Mammary epithelial cell (primary cell): ENCODE measurements at regions of chr1 and their contacts with region 1.

Region 1: DNA sequence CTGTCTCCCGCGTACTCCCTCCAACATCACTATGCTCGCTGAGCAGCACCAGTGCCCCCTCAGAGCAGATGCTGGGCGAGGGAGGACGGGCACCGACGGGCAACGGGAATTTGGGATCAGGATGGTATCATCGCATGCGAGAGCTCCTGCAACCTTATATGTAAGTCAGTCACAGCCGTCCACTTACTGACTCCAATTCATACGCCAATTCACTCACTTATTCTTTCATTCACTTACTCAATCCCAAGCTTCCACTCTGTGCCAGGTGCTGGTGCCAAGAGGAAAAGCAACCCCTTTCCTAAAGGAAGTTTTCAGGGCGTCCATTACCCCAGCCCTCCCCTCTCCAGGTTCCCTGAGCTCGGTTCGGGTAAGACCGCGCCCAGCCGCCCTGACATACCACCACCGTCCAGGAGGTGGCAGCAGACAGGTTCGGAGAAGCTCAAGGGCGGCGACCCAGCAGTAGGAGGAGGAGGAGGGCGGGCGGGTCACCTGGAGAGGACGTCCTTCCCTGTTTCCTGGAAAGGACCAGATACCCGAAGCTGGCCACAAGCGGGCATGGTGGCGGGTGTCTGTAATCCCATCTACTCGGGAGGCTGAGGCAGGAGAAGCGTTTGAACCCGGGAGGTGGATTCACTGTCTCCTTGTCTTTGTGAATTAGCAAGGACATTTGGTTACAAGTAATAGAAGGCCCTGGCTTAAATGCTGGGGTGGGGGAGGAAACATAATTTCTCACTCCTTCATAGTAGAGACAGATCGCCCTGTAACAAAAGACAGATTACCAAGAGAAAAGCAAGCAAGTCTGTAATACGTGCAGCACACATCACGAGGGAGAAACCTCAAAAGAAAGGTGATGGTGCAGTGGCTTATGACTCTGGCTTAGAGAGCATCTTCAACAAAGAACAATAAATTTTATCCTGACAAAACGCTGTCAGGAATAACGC is 7.6 kb upstream of the IL22RA1 start:
- DNase-seq: peak; percentile 88
- H3K4me3 ChIP-seq: peak overlapping the region; percentile 26 to 33 (median 29)
- H3K27ac ChIP-seq: peak overlapping the region; percentile 93
- H3K4me1 ChIP-seq: peaks cover 30% of the 10 kb centered on the region
- H3K27me3 ChIP-seq: no peaks in the 10 kb centered on the region
- CTCF ChIP-seq: peak; percentile 72 to 88

Region 2: GRCh38 chr1:24080131-24080530 is 70.4 kb before region 1 on chr1:
- CTCF ChIA-PET with region 1: no interaction called
- dilution Hi-C with region 1: loop called (anchors 5 kb)
- in situ Hi-C with region 1: no loop called
- intact Hi-C with region 1: no loop called
- DNase-seq: no peak
- H3K4me3 ChIP-seq: no peak overlapping the region
- H3K27ac ChIP-seq: no peak overlapping the region
- H3K4me1 ChIP-seq: no peaks in the 10 kb centered on the region
- H3K27me3 ChIP-seq: no peaks in the 10 kb centered on the region
- CTCF ChIP-seq: no peak

Region 3: GRCh38 chr1:24119859-24120756 is 30.4 kb before region 1 on chr1:
- CTCF ChIA-PET with region 1: interaction called, 6 read pairs
- dilution Hi-C with region 1: no loop called
- in situ Hi-C with region 1: no loop called
- intact Hi-C with region 1: loop called (anchors 1 kb)
- DNase-seq: peak; percentile 72
- H3K4me3 ChIP-seq: no peak overlapping the region
- H3K27ac ChIP-seq: no peak overlapping the region
- H3K4me1 ChIP-seq: peaks cover 24% of the 10 kb centered on the region
- H3K27me3 ChIP-seq: no peaks in the 10 kb centered on the region
- CTCF ChIP-seq: no peak

Region 4: DNA sequence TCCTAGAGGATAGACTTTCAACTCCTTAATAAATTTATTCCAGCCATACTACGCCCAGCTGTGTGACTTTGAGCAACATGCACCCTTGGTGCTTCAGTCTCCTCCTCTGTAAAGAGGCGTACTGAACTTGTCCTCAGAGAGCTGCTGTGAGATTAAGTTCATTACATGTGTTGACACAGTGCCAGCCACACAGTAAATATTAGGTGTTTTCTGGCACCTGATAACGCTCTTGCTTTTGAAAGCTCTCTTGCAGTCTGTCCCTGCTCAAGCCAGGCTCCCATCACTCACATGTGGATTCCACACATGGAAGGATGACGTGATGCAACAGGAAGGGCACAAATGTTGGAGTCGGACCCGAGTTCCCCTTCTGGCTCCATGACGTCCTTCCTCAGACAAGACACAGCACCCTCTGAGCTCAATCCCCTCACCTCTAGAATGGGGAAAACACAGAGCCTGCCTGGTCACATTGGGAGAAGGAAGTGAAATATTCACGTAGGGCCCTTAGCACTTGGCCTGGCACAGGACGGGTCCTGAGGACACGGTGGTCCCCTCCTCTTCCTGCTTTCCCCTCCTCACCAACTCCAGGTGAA is 28.8 kb after region 1 on chr1:
- CTCF ChIA-PET with region 1: no interaction called
- dilution Hi-C with region 1: no loop called
- in situ Hi-C with region 1: no loop called
- intact Hi-C with region 1: no loop called
- DNase-seq: no peak
- H3K4me3 ChIP-seq: no peak overlapping the region
- H3K27ac ChIP-seq: no peak overlapping the region
- H3K4me1 ChIP-seq: peaks cover 6% of the 10 kb centered on the region
- H3K27me3 ChIP-seq: no peaks in the 10 kb centered on the region
- CTCF ChIP-seq: no peak

Region 5: GRCh38 chr1:24289937-24290595 is 139.6 kb after region 1 on chr1:
- CTCF ChIA-PET with region 1: no interaction called
- dilution Hi-C with region 1: no loop called
- in situ Hi-C with region 1: no loop called
- intact Hi-C with region 1: loop called (anchors 5 kb)
- DNase-seq: peak; percentile 91
- H3K4me3 ChIP-seq: no peak overlapping the region
- H3K27ac ChIP-seq: peak overlapping the region; percentile 11
- H3K4me1 ChIP-seq: peaks cover 62% of the 10 kb centered on the region
- H3K27me3 ChIP-seq: no peaks in the 10 kb centered on the region
- CTCF ChIP-seq: no peak

Region 6: GRCh38 chr1:24391882-24392603 is 241.5 kb after region 1 on chr1:
- CTCF ChIA-PET with region 1: interaction called, 16 read pairs
- dilution Hi-C with region 1: no loop called
- in situ Hi-C with region 1: no loop called
- intact Hi-C with region 1: loop called (anchors 1 kb)
- DNase-seq: peak; percentile 50
- H3K4me3 ChIP-seq: peak overlapping the region in 2 of 3 experiments; percentile 14 to 24
- H3K27ac ChIP-seq: peak overlapping the region; percentile 76
- H3K4me1 ChIP-seq: peaks cover 28% of the 10 kb centered on the region
- H3K27me3 ChIP-seq: no peaks in the 10 kb centered on the region
- CTCF ChIP-seq: peak; percentile 87 to 90

Region 7: GRCh38 chr1:24481101-24481500 is 330.6 kb after region 1 on chr1:
- CTCF ChIA-PET with region 1: no interaction called
- dilution Hi-C with region 1: no loop called
- in situ Hi-C with region 1: no loop called
- intact Hi-C with region 1: no loop called
- DNase-seq: no peak
- H3K4me3 ChIP-seq: no peak overlapping the region
- H3K27ac ChIP-seq: no peak overlapping the region
- H3K4me1 ChIP-seq: no peaks in the 10 kb centered on the region
- H3K27me3 ChIP-seq: no peaks in the 10 kb centered on the region
- CTCF ChIP-seq: no peak

Region 8: DNA sequence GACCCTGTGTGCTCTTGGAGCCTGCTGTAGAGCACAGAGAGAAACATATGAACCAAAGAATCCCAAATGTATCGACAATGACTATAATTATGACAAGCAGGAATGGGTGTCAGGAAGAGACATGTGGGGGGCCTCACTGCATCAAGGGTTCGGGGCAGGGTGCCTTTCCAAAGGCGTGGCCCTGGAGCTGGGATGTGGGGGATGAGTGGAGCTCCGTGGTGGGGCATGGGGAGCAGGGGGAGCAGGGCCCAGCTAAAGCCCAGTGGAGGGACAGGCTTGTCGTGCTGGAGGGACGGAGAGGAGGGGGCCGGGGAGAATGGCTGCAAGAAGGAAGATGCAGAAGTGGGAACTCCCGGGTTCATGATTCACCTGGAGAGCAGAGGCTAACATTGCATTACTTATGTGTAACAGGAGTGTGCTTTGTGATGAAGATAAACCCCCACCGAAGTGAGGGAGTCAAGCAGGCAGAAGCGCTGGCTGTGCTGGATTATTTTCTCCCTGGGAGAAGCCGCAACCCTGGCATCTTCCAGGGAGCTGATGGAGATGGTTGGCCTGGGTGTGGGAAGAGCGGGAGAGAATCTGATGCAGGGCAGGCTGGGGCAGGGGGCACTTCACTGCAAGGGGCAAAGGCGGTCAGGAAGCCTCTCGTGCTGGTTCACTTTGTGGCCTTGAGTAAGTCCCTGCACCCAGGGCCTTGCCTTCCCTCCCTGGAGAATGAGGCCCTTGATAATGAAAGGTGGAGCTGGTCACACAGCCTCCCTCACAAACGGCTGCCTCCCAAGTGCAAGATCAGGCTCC is 904.2 kb after region 1 on chr1:
- CTCF ChIA-PET with region 1: interaction called, 10 read pairs
- dilution Hi-C with region 1: no loop called
- in situ Hi-C with region 1: no loop called
- intact Hi-C with region 1: no loop called
- DNase-seq: no peak
- H3K4me3 ChIP-seq: no peak overlapping the region
- H3K27ac ChIP-seq: no peak overlapping the region
- H3K4me1 ChIP-seq: peaks cover 4% of the 10 kb centered on the region
- H3K27me3 ChIP-seq: no peaks in the 10 kb centered on the region
- CTCF ChIP-seq: no peak